CD8-positive, alpha-beta T cell (primary cell): ENCODE measurements at regions of chr1 and their contacts with region 1.

Region 1: GRCh38 chr1:228082135-228082891 is at the start of gene ARF1:
- DNase-seq: peak; percentile 83 to 98 (median 93)
- ATAC-seq: peak; percentile 93
- H3K4me3 ChIP-seq: peak within 1 kb of the TSS; percentile 94 to 95
- H3K4me3 Mint-ChIP-seq: peak within 1 kb of the TSS; percentile 96
- H3K27ac ChIP-seq: peak within 1 kb of the TSS; percentile 96 to 97
- H3K27ac Mint-ChIP-seq: peak within 1 kb of the TSS; percentile 97
- H3K4me1 ChIP-seq: peaks cover 50% of the 10 kb centered on the region
- H3K4me1 Mint-ChIP-seq: peaks cover 51% of the 10 kb centered on the region
- H3K27me3 ChIP-seq: no peaks in the 10 kb centered on the region
- H3K27me3 Mint-ChIP-seq: no peaks in the 10 kb centered on the region
- CTCF ChIP-seq: no peak
- total RNA-seq, gene ARF1: 375 to 381 TPM

Region 2: DNA sequence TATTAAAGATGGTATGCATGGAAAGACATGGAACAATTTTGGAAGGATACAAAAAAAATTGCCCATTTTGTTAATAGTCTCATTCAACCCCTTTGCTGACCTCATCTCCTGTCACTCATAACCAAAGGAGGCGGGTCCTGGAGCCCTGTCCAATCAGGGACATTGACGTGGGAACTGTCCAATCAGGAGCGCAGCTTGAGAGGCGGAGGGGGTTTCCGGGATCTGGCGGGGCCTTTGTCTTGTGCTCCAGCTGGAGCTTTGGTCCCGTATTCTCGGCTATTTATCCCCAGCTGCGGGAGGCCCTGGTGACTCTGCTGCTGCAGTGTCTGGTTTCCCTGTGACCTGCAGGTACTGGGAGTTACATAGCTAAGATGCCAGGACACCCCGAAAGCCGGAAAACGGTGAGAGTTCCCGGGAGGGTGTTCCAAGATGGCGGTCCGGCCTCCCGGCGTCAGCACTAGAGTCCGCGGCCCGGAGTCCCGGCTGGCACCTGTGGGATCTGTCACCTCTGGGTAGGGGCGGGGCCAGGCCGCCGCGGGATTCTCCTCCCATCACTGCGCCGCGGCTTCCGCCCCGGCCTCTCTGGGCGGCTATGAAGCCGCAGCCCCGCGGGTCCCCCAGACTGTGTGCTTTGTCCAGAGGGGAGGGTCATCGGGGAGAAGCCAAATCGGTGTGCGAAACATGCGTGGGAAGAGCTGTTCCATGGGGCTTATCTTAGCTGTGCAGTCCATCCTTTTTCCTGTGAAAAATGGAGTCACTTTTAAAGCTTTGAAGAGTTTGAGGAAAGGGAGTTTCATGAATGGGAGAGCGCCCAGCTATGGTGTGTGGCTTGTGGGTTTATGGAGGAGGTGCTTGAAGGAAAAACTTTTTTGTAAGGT is 518.8 kb before region 1 on chr1 and contains the start of gene ZNF678:
- CTCF ChIA-PET with region 1: no interaction called
- POLR2A ChIA-PET with region 1: no interaction called
- intact Hi-C with region 1: loop called in 1 of 2 experiments (anchors 10 kb)
- DNase-seq: peak; percentile 71 to 95 (median 86)
- ATAC-seq: peak; percentile 95
- H3K4me3 ChIP-seq: peak within 1 kb of the TSS; percentile 81 to 87
- H3K4me3 Mint-ChIP-seq: peak within 1 kb of the TSS; percentile 90
- H3K27ac ChIP-seq: peak within 1 kb of the TSS; percentile 76 to 83
- H3K27ac Mint-ChIP-seq: peak within 1 kb of the TSS; percentile 93
- H3K4me1 ChIP-seq: peaks cover 7% of the 10 kb centered on the region
- H3K4me1 Mint-ChIP-seq: peaks cover 47% of the 10 kb centered on the region
- H3K27me3 ChIP-seq: peaks cover 4 to 17% of the 10 kb centered on the region in 2 experiments
- H3K27me3 Mint-ChIP-seq: peaks cover 26% of the 10 kb centered on the region
- CTCF ChIP-seq: no peak
- total RNA-seq, gene ZNF678: 2.9 to 3.2 TPM

Region 3: DNA sequence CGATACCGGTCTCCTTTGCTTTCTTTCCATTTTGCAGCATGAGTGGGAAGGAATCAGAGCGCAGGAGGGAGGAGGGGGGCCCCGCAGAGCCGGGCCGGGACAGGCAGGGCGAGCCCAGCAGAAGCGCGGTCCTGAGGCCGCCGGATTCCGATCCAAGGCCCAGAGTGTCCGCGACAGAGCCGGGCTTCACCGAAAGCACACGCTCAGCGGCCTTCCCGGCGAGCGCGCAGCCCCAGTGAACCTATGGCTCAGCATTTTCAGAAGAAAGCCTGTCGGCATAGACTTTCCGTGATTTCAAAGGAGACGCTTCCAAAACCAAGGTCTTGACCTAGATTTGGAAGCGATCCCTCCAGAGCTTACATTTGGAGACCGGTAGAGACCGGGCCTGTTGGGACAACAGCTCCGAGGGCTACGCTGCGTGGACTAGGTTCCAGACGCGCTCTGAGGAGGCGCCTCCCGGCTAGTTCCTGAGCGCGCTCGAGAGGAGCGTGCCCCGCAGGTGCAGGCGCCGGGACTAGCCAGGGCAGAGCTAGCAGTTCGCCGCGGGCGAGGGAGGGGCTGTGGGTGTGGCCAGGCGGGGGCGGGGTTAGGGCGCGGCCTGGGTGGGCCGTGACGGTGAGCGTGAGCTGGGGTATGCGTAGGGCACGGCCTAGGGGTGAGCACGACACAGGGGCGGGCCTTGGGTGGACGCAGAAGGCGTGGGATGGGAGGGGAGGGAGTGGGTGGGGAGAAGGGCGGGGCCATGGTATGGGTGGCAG is 294.6 kb before region 1 on chr1:
- CTCF ChIA-PET with region 1: no interaction called
- POLR2A ChIA-PET with region 1: no interaction called
- intact Hi-C with region 1: loop called (anchors 1 to 2 kb)
- DNase-seq: peak; percentile 92 to 98 (median 95)
- ATAC-seq: peak; percentile 93
- H3K4me3 ChIP-seq: peak overlapping the region; percentile 75 to 97
- H3K4me3 Mint-ChIP-seq: peak overlapping the region; percentile 83
- H3K27ac ChIP-seq: peak overlapping the region in 1 of 2 experiments; percentile 52
- H3K27ac Mint-ChIP-seq: peak overlapping the region; percentile 71
- H3K4me1 ChIP-seq: peaks cover 21% of the 10 kb centered on the region
- H3K4me1 Mint-ChIP-seq: peaks cover 21% of the 10 kb centered on the region
- H3K27me3 ChIP-seq: peaks cover 0 to 5% of the 10 kb centered on the region in 2 experiments
- H3K27me3 Mint-ChIP-seq: no peaks in the 10 kb centered on the region
- CTCF ChIP-seq: no peak

Region 4: DNA sequence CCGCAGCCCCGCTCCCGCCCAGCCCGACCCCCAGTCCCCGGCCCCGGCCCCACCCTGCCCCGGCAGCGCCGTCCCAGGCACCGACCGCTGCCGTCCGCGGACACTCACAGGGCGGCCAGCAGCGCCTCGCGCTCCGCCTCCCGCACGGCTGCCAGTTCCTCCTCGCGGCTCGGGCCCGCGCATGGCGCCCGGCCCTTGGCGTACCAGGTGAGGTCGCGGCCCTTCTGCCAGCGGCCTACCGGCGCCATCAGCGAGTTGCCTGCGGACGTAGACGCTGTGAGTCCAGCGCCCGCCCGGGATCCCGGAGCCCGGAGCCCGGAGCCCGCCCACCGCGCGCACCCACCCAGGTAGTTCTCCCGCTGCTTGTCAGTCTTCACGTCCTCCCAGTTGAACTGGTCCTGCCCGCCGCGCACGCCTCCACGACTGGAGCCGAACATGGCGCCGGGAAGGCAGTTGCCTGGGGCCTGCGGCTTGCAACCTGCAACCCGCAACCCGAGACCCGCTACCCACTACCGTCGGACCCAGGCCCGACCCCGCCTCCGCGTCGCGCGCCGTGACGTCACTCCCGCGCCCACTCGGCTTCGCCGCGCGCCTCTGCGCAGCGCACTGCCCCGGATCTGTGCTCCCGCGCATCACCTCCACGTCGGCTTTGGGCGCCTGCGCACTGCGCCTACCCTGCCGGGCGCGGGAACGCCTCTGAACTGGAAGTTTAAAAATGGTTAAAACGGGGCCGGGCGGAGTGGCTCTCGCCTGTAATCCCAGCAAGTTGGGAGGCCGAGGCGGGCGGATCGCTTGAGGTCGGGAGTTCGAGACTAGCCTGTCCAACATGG is 20.7 kb after region 1 on chr1 and contains the start of gene C1orf35:
- CTCF ChIA-PET with region 1: no interaction called
- POLR2A ChIA-PET with region 1: interaction called, 6 read pairs
- intact Hi-C with region 1: loop called (anchors 1 kb)
- DNase-seq: peak; percentile 81 to 96 (median 94)
- ATAC-seq: peak; percentile 85
- H3K4me3 ChIP-seq: peak within 1 kb of the TSS; percentile 72 to 77
- H3K4me3 Mint-ChIP-seq: peak within 1 kb of the TSS; percentile 95
- H3K27ac ChIP-seq: peak within 1 kb of the TSS; percentile 80 to 91
- H3K27ac Mint-ChIP-seq: peak within 1 kb of the TSS; percentile 95
- H3K4me1 ChIP-seq: peaks cover 21% of the 10 kb centered on the region
- H3K4me1 Mint-ChIP-seq: peaks cover 25% of the 10 kb centered on the region
- H3K27me3 ChIP-seq: no peaks in the 10 kb centered on the region
- H3K27me3 Mint-ChIP-seq: no peaks in the 10 kb centered on the region
- CTCF ChIP-seq: no peak
- total RNA-seq, gene C1orf35: 28.4 to 30.2 TPM

Region 5: GRCh38 chr1:228165372-228166169 is 83.3 kb after region 1 on chr1 and contains the start of gene IBA57:
- CTCF ChIA-PET with region 1: no interaction called
- POLR2A ChIA-PET with region 1: interaction called, 17 read pairs
- intact Hi-C with region 1: loop called (anchors 1 kb)
- DNase-seq: peak; percentile 99 to 100 (median 100)
- ATAC-seq: peak; percentile 82
- H3K4me3 ChIP-seq: peak within 1 kb of the TSS; percentile 70 to 92
- H3K4me3 Mint-ChIP-seq: peak within 1 kb of the TSS; percentile 85
- H3K27ac ChIP-seq: peak within 1 kb of the TSS; percentile 94 to 99
- H3K27ac Mint-ChIP-seq: peak within 1 kb of the TSS; percentile 98
- H3K4me1 ChIP-seq: peaks cover 44% of the 10 kb centered on the region
- H3K4me1 Mint-ChIP-seq: peaks cover 52% of the 10 kb centered on the region
- H3K27me3 ChIP-seq: no peaks in the 10 kb centered on the region
- H3K27me3 Mint-ChIP-seq: no peaks in the 10 kb centered on the region
- CTCF ChIP-seq: peak; percentile 68
- total RNA-seq, gene IBA57: 23.5 to 23.8 TPM

Region 6: GRCh38 chr1:228486596-228487335 is 404.5 kb after region 1 on chr1:
- CTCF ChIA-PET with region 1: no interaction called
- POLR2A ChIA-PET with region 1: no interaction called
- intact Hi-C with region 1: loop called (anchors 1 to 2 kb)
- DNase-seq: peak; percentile 66 to 94 (median 77)
- ATAC-seq: peak; percentile 75
- H3K4me3 ChIP-seq: peak overlapping the region; percentile 88 to 90
- H3K4me3 Mint-ChIP-seq: peak overlapping the region; percentile 98
- H3K27ac ChIP-seq: peak overlapping the region; percentile 100
- H3K27ac Mint-ChIP-seq: peak overlapping the region; percentile 100
- H3K4me1 ChIP-seq: peaks cover 31% of the 10 kb centered on the region
- H3K4me1 Mint-ChIP-seq: peaks cover 37% of the 10 kb centered on the region
- H3K27me3 ChIP-seq: no peaks in the 10 kb centered on the region
- H3K27me3 Mint-ChIP-seq: no peaks in the 10 kb centered on the region
- CTCF ChIP-seq: no peak